Dendritic cell treated with granulocyte-macrophage colony-stimulating factor and Interleukin-4, amounts not matched to agents 40 ng/mL and 50 ng/mL, for 4 days (primary cell): ENCODE measurements at regions of chr6 and their contacts with region 1.

Region 1: DNA sequence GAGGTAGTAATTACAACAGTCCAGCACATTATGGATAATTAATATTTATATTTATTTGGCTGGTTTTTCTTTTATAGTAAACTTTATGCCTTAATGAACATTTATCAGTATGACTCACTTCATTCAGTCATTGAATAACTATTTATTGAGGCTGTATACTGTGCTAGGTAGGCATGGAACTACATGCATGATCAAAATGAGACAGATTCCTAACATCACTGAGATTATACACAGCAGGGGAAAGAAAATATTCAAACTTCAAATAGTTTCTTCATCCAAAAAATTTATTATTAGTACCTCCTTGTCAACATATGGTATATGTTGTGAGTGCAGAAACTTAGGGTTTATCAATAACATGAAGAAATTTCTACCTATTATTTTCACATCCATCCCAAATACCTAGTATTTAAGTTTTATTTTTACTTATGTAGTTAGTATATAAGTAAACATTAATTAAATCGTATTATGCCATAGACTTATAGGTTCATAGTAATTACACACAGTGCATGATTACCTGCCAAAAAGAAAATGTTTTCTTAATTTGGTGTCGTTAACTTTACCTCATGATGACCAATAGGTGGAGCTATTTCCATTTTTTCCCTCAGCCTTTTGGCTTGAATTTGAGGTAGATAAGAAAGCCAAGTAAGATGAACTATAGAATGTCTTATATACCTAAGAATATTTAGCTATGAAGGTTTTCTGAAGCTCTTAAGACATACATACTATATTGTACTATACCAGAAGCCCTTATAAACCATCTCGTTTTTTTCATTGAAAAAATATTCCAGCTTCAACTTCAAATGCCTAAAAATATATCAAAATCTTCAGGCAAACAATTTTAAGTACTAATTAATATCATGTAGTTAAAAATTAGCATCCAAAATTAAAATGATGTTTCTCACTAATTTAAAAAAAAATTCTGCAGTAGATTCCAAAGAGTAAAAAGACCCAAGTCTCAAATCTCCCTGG is 12.5 kb upstream of the TMEM30A start:
- H3K4me3 Mint-ChIP-seq: no peak overlapping the region
- H3K27ac Mint-ChIP-seq: no peak overlapping the region
- H3K4me1 Mint-ChIP-seq: peaks cover 13% of the 10 kb centered on the region
- H3K27me3 Mint-ChIP-seq: no peaks in the 10 kb centered on the region

Region 2: DNA sequence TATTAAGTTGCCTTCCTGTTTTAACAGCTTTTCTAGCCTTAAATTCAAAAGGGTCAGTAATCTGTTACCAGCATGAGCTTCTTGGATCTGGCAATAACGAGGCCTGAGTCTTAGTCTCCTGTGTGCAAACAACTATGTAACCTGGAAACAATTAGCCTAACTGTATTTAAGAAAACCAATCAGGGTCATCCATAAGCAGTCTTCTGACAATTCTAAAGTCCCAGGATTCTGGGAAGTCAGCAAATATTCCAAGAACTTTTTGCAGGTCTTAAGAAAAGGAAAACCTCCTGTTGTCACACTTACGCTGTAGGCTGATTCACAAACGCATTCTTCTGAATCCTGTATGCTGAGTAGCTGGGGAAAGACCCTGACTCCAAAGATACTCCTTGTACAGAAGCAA is 181.6 kb before region 1 on chr6:
- intact Hi-C with region 1: no loop called
- H3K4me3 Mint-ChIP-seq: no peak overlapping the region
- H3K27ac Mint-ChIP-seq: no peak overlapping the region
- H3K4me1 Mint-ChIP-seq: no peaks in the 10 kb centered on the region
- H3K27me3 Mint-ChIP-seq: no peaks in the 10 kb centered on the region

Region 3: GRCh38 chr6:75266716-75267291 is 30.3 kb before region 1 on chr6:
- intact Hi-C with region 1: loop called (anchors 5 kb)
- H3K4me3 Mint-ChIP-seq: no peak overlapping the region
- H3K27ac Mint-ChIP-seq: no peak overlapping the region
- H3K4me1 Mint-ChIP-seq: peaks cover 22% of the 10 kb centered on the region
- H3K27me3 Mint-ChIP-seq: no peaks in the 10 kb centered on the region

Region 4: GRCh38 chr6:75397656-75398465 is 100.8 kb after region 1 on chr6:
- intact Hi-C with region 1: no loop called
- H3K4me3 Mint-ChIP-seq: no peak overlapping the region
- H3K27ac Mint-ChIP-seq: no peak overlapping the region
- H3K4me1 Mint-ChIP-seq: no peaks in the 10 kb centered on the region
- H3K27me3 Mint-ChIP-seq: no peaks in the 10 kb centered on the region